ENCODE measurements at regions of chr15 and their contacts with region 1.

Region 1: DNA sequence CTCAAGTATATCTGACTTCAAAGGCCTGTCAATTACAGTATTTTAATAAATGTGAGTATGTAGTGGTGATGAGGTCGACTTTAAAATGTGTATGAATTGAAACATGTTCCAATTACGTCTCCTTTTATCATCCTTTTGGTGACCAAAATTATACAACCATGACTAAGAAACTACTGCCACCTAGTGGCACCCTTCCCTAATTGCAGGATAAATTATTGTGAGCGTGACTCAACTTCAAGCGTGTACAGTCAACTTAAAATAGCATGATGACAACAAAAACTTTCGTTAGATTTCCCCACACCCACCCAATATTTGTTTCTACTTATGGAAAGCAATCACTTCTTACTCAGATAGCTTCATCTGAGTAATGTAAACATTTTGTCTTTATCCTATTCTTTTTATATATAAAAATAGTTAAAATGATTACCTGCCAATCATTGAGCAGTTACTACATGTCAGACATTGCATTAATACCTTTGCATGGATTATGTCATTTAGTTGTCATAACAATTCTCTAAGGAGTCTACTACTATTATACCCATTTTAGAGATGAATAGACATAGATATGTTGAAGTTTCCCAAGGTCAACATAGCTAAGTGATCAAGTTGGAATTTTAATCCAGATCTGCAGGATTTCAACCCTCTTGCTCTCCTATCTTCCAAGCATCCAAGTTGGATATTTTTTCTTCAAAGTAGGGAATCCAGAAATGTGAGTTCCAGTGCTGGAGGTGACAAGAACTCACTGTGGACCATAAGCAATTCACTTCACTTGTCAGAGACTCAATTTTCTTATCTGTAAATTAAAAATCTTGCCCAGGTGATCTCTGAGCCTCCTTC is 106.0 kb downstream of the MEX3B start:
- DNase-seq: peak; percentile 81
- ATAC-seq: 0 out of 2 replicates have a peak, but pooled peaks have one; percentile 24
- H3K4me3 ChIP-seq: no peak overlapping the region
- H3K27ac ChIP-seq: peak overlapping the region; percentile 59; the same call in 1 of the 2 replicates
- H3K4me1 ChIP-seq: peaks cover 6% of the 10 kb centered on the region
- H3K27me3 ChIP-seq: no peaks in the 10 kb centered on the region
- CTCF ChIP-seq: peak; percentile 85
- POLR2A ChIP-seq: no peak
- RAD21 ChIP-seq: peak; percentile 82

Region 2: GRCh38 chr15:81410318-81410753 is 529.5 kb before region 1 on chr15:
- CTCF ChIA-PET with region 1: no interaction called
- POLR2A ChIA-PET with region 1: no interaction called
- dilution Hi-C with region 1: no loop called
- in situ Hi-C with region 1: no loop called
- intact Hi-C with region 1: loop called (anchors 1 kb)
- DNase-seq: peak; percentile 74
- ATAC-seq: peak; percentile 80
- H3K4me3 ChIP-seq: no peak overlapping the region
- H3K27ac ChIP-seq: no peak overlapping the region
- H3K4me1 ChIP-seq: no peaks in the 10 kb centered on the region
- H3K27me3 ChIP-seq: peaks cover 14% of the 10 kb centered on the region
- CTCF ChIP-seq: peak; percentile 68
- POLR2A ChIP-seq: no peak
- RAD21 ChIP-seq: peak; percentile 81

Region 3: DNA sequence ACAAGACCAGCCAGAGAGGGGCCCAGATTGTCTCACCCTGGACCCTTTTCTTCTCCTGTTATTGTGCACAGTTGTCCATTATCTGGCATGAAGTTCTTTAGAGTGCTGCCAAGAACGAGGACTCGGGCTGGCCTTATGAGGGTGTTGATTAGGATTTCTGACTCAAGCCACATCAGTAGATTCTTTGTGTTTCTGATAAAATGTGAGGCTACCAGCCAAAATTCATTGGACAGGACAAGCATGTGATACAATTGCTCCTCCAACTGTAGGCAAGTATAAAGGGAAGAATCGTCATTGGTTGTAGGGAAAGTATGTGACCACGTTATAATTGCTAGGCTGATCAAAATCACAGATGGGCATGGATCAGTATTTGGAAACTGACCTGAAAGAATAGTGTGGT is 466.6 kb before region 1 on chr15:
- CTCF ChIA-PET with region 1: no interaction called
- POLR2A ChIA-PET with region 1: no interaction called
- dilution Hi-C with region 1: no loop called
- in situ Hi-C with region 1: loop called (anchors 10 kb)
- intact Hi-C with region 1: no loop called
- DNase-seq: no peak
- ATAC-seq: no peak
- H3K4me3 ChIP-seq: no peak overlapping the region
- H3K27ac ChIP-seq: no peak overlapping the region
- H3K4me1 ChIP-seq: no peaks in the 10 kb centered on the region
- H3K27me3 ChIP-seq: peaks cover 14% of the 10 kb centered on the region
- CTCF ChIP-seq: no peak
- POLR2A ChIP-seq: no peak
- RAD21 ChIP-seq: no peak

Region 4: GRCh38 chr15:81480645-81481053 is 459.2 kb before region 1 on chr15:
- CTCF ChIA-PET with region 1: interaction called, 3 read pairs
- POLR2A ChIA-PET with region 1: no interaction called
- dilution Hi-C with region 1: no loop called
- in situ Hi-C with region 1: loop called (anchors 10 kb)
- intact Hi-C with region 1: loop called (anchors 1 kb)
- DNase-seq: peak; percentile 69
- ATAC-seq: peak; percentile 81
- H3K4me3 ChIP-seq: no peak overlapping the region
- H3K27ac ChIP-seq: no peak overlapping the region
- H3K4me1 ChIP-seq: no peaks in the 10 kb centered on the region
- H3K27me3 ChIP-seq: no peaks in the 10 kb centered on the region
- CTCF ChIP-seq: peak; percentile 83
- POLR2A ChIP-seq: 0 out of 2 replicates have a peak, but pooled peaks have one; percentile 29
- RAD21 ChIP-seq: peak; percentile 94

Region 5: GRCh38 chr15:81642451-81642990 is 297.3 kb before region 1 on chr15:
- CTCF ChIA-PET with region 1: no interaction called
- POLR2A ChIA-PET with region 1: no interaction called
- dilution Hi-C with region 1: no loop called
- in situ Hi-C with region 1: no loop called
- intact Hi-C with region 1: loop called (anchors 1 kb)
- DNase-seq: peak; percentile 97
- ATAC-seq: peak; percentile 95
- H3K4me3 ChIP-seq: no peak overlapping the region
- H3K27ac ChIP-seq: peak overlapping the region; percentile 93; the same call in 1 of the 2 replicates
- H3K4me1 ChIP-seq: peaks cover 11% of the 10 kb centered on the region
- H3K27me3 ChIP-seq: no peaks in the 10 kb centered on the region
- CTCF ChIP-seq: no peak
- POLR2A ChIP-seq: no peak
- RAD21 ChIP-seq: no peak

Region 6: GRCh38 chr15:82030176-82030687 is 90.4 kb after region 1 on chr15:
- CTCF ChIA-PET with region 1: no interaction called
- POLR2A ChIA-PET with region 1: no interaction called
- dilution Hi-C with region 1: no loop called
- in situ Hi-C with region 1: no loop called
- intact Hi-C with region 1: no loop called
- DNase-seq: no peak
- ATAC-seq: no peak
- H3K4me3 ChIP-seq: no peak overlapping the region
- H3K27ac ChIP-seq: no peak overlapping the region
- H3K4me1 ChIP-seq: no peaks in the 10 kb centered on the region
- H3K27me3 ChIP-seq: no peaks in the 10 kb centered on the region
- CTCF ChIP-seq: no peak
- POLR2A ChIP-seq: no peak
- RAD21 ChIP-seq: no peak

Region 7: GRCh38 chr15:82103468-82103867 is 163.6 kb after region 1 on chr15:
- CTCF ChIA-PET with region 1: no interaction called
- POLR2A ChIA-PET with region 1: no interaction called
- dilution Hi-C with region 1: no loop called
- in situ Hi-C with region 1: no loop called
- intact Hi-C with region 1: loop called (anchors 5 kb)
- DNase-seq: no peak
- ATAC-seq: no peak
- H3K4me3 ChIP-seq: no peak overlapping the region
- H3K27ac ChIP-seq: no peak overlapping the region
- H3K4me1 ChIP-seq: peaks cover 15% of the 10 kb centered on the region
- H3K27me3 ChIP-seq: no peaks in the 10 kb centered on the region
- CTCF ChIP-seq: peak; percentile 37
- POLR2A ChIP-seq: no peak
- RAD21 ChIP-seq: peak; percentile 53

Region 8: GRCh38 chr15:82177291-82178010 is 237.6 kb after region 1 on chr15:
- CTCF ChIA-PET with region 1: no interaction called
- POLR2A ChIA-PET with region 1: no interaction called
- dilution Hi-C with region 1: no loop called
- in situ Hi-C with region 1: no loop called
- intact Hi-C with region 1: no loop called
- DNase-seq: peak; percentile 62
- ATAC-seq: peak; percentile 56
- H3K4me3 ChIP-seq: no peak overlapping the region
- H3K27ac ChIP-seq: no peak overlapping the region
- H3K4me1 ChIP-seq: peaks cover 7% of the 10 kb centered on the region
- H3K27me3 ChIP-seq: no peaks in the 10 kb centered on the region
- CTCF ChIP-seq: no peak
- POLR2A ChIP-seq: no peak
- RAD21 ChIP-seq: no peak

Region 9: DNA sequence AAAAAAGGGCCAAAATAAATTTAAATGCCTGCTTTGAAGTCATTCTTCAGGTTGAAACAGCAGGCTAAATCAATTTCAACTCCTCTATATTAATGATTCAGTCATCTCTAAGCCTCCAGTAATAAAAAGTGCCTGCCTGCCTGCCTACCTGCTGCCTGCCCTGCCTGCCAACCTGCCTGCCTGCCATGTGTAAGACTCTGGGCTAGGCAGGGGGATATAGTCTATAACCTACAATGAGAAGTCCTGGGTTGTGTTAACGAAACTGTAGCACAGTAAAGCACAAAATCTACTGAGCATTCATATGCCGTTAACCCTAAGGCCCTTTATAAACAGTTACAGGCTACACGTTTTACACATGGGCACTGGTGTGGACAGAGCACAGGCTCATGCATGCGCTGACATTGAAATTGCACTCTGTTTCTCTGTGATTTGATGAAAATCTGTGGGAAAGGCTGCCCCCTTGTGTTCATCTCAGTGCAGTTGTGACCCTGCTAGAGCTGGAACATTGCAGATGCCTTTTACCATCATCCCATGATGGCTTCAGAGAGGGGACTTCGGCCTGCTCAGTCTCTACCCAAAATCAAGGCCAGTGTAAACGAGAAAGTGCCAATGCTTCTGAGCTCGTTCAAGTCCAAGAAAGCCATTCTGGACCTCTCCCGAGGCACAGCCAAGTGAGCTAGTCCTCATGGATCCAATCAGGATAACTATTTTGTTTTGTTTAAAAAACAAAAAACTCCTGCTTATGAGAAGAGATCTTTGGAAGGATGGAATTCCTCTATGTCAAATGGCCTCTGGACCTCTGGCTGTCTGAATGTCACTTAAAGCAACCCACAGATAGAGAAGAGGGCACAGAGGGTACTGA is 258.1 kb after region 1 on chr15:
- CTCF ChIA-PET with region 1: no interaction called
- POLR2A ChIA-PET with region 1: no interaction called
- dilution Hi-C with region 1: no loop called
- in situ Hi-C with region 1: no loop called
- intact Hi-C with region 1: loop called (anchors 5 kb)
- DNase-seq: peak; percentile 79
- ATAC-seq: peak; percentile 99
- H3K4me3 ChIP-seq: no peak overlapping the region
- H3K27ac ChIP-seq: no peak overlapping the region
- H3K4me1 ChIP-seq: no peaks in the 10 kb centered on the region
- H3K27me3 ChIP-seq: no peaks in the 10 kb centered on the region
- CTCF ChIP-seq: peak; percentile 82
- POLR2A ChIP-seq: no peak; the same call in 1 of the 2 replicates
- RAD21 ChIP-seq: peak; percentile 91

Measured in IMR-90 (cell line).